Kidney (tissue), 22 donors: ENCODE measurements at regions of chr11 and their contacts with region 1.

Region 1: GRCh38 chr11:44538375-44539054 is 26.9 kb upstream of the CD82 start:
- DNase-seq: peak; percentile 79 to 90 (median 84)
- H3K4me3 ChIP-seq: no peak overlapping the region
- H3K27ac ChIP-seq: no peak overlapping the region
- H3K4me1 ChIP-seq: peaks cover 0 to 3% (median 0%) of the 10 kb centered on the region in 3 donors
- H3K27me3 ChIP-seq: no peaks in the 10 kb centered on the region
- CTCF ChIP-seq: peak; percentile 91

Region 2: GRCh38 chr11:44110231-44110679 is 428.3 kb before region 1 on chr11:
- intact Hi-C with region 1: loop called (anchors 10 kb)
- DNase-seq: peak in 3 of 5 donors; percentile 62 to 75 (median 64)
- H3K4me3 ChIP-seq: no peak overlapping the region
- H3K27ac ChIP-seq: no peak overlapping the region
- H3K4me1 ChIP-seq: no peaks in the 10 kb centered on the region
- H3K27me3 ChIP-seq: no peaks in the 10 kb centered on the region
- CTCF ChIP-seq: peak; percentile 64

Region 3: GRCh38 chr11:44286268-44286880 is 252.1 kb before region 1 on chr11:
- intact Hi-C with region 1: loop called (anchors 5 kb)
- DNase-seq: peak in 3 of 5 donors; percentile 49 to 68 (median 52)
- H3K4me3 ChIP-seq: no peak overlapping the region
- H3K27ac ChIP-seq: no peak overlapping the region
- H3K4me1 ChIP-seq: no peaks in the 10 kb centered on the region
- H3K27me3 ChIP-seq: no peaks in the 10 kb centered on the region
- CTCF ChIP-seq: peak; percentile 95